PC-3 (cell line): ENCODE measurements at regions of chr5 and their contacts with region 1.

Region 1: GRCh38 chr5:156893517-156893916 is 43.4 kb downstream of the PPP1R2B start:
- DNase-seq: no peak
- ATAC-seq: no peak
- H3K4me3 ChIP-seq: no peak overlapping the region
- H3K27ac ChIP-seq: no peak overlapping the region
- H3K4me1 ChIP-seq: no peaks in the 10 kb centered on the region
- H3K27me3 ChIP-seq: peaks cover 23% of the 10 kb centered on the region
- CTCF ChIP-seq: no peak

Region 2: GRCh38 chr5:156411185-156411613 is 482.3 kb before region 1 on chr5:
- CTCF ChIA-PET with region 1: no interaction called
- POLR2A ChIA-PET with region 1: no interaction called
- intact Hi-C with region 1: no loop called
- DNase-seq: no peak
- ATAC-seq: no peak
- H3K4me3 ChIP-seq: no peak overlapping the region
- H3K27ac ChIP-seq: no peak overlapping the region
- H3K4me1 ChIP-seq: no peaks in the 10 kb centered on the region
- H3K27me3 ChIP-seq: no peaks in the 10 kb centered on the region
- CTCF ChIP-seq: no peak

Region 3: DNA sequence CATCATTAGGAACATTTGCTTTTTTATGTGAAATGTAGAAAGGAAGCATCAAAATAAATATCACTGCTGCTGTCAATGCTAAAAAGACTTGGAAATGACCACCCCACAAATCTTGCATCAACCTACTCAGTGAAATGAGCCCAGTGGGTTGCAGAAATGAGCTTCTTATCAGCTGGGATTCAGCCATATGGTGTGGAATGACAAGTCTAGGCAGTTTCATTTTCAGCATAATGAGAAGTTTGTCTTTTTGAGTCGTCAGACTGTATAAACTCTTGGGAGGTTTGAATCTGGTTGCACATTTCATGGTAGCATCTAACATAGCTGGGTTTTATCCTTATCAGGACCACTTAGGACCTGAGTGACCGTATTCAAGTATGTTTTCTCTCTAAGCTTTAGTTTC is 294.6 kb before region 1 on chr5:
- CTCF ChIA-PET with region 1: no interaction called
- POLR2A ChIA-PET with region 1: interaction called, 13 read pairs
- intact Hi-C with region 1: no loop called
- DNase-seq: no peak
- ATAC-seq: no peak
- H3K4me3 ChIP-seq: no peak overlapping the region
- H3K27ac ChIP-seq: no peak overlapping the region
- H3K4me1 ChIP-seq: no peaks in the 10 kb centered on the region
- H3K27me3 ChIP-seq: no peaks in the 10 kb centered on the region
- CTCF ChIP-seq: no peak

Region 4: GRCh38 chr5:156934450-156935211 is 41.1 kb after region 1 on chr5:
- CTCF ChIA-PET with region 1: no interaction called
- POLR2A ChIA-PET with region 1: no interaction called
- intact Hi-C with region 1: no loop called
- DNase-seq: peak; percentile 9
- ATAC-seq: no peak
- H3K4me3 ChIP-seq: no peak overlapping the region
- H3K27ac ChIP-seq: no peak overlapping the region
- H3K4me1 ChIP-seq: no peaks in the 10 kb centered on the region
- H3K27me3 ChIP-seq: peaks cover 3% of the 10 kb centered on the region; the same call in 1 of the 2 replicates
- CTCF ChIP-seq: peak; percentile 60